ENCODE measurements at regions of chr5 and their contacts with region 1.

Region 1: GRCh38 chr5:149345147-149345875 is at the start of gene GRPEL2:
- DNase-seq: peak; percentile 89
- H3K4me3 Mint-ChIP-seq: peak within 1 kb of the TSS; percentile 95
- H3K27ac Mint-ChIP-seq: peak within 1 kb of the TSS; percentile 94
- H3K4me1 Mint-ChIP-seq: peaks cover 43% of the 10 kb centered on the region
- H3K27me3 Mint-ChIP-seq: no peaks in the 10 kb centered on the region
- total RNA-seq, gene GRPEL2: 30.4 and 30.6 TPM in 2 replicates

Region 2: GRCh38 chr5:148383564-148384379 is 961.5 kb before region 1 on chr5 and contains the start of gene FBXO38:
- intact Hi-C with region 1: loop called (anchors 1 kb)
- DNase-seq: peak; percentile 95
- H3K4me3 Mint-ChIP-seq: peak within 1 kb of the TSS; percentile 94
- H3K27ac Mint-ChIP-seq: peak within 1 kb of the TSS; percentile 99
- H3K4me1 Mint-ChIP-seq: peaks cover 72% of the 10 kb centered on the region
- H3K27me3 Mint-ChIP-seq: no peaks in the 10 kb centered on the region
- total RNA-seq, gene FBXO38: 64.3 and 80.3 TPM in 2 replicates

Region 3: DNA sequence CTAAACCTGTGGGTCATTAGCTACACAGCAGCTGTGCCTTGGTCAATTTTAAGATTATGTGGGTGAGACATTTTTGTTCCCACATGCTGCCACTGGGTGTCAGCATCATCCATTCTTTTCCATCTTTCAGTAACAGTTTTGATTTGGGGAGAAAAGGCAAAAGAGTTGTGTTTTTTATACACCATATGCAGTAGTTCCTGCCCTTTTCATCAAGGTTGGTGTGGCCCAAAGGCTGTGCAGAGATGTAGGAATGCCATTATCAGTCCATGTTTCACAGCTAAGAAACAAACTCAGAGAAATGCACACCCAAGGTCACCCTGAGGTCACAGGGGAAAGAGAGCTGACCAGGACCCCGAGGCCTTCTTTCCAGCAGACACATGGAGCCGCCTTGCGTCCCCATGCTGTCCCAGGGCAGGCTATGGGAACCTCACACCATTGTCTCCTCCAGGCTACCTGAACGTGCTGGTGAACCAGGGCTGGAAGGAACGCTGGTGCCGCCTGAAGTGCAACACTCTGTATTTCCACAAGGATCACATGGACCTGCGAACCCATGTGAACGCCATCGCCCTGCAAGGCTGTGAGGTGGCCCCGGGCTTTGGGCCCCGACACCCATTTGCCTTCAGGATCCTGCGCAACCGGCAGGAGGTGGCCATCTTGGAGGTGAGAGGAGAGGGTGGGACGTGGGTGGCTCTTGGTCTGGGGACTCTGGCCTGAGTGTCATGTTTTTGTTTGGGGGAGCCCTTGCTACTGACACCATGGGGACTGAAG is 27.8 kb before region 1 on chr5:
- intact Hi-C with region 1: loop called (anchors 2 kb)
- DNase-seq: no peak
- H3K4me3 Mint-ChIP-seq: no peak overlapping the region
- H3K27ac Mint-ChIP-seq: no peak overlapping the region
- H3K4me1 Mint-ChIP-seq: no peaks in the 10 kb centered on the region
- H3K27me3 Mint-ChIP-seq: no peaks in the 10 kb centered on the region

Region 4: GRCh38 chr5:149367249-149367971 is 22.1 kb after region 1 on chr5:
- intact Hi-C with region 1: loop called (anchors 1 kb)
- DNase-seq: peak; percentile 37
- H3K4me3 Mint-ChIP-seq: no peak overlapping the region
- H3K27ac Mint-ChIP-seq: no peak overlapping the region
- H3K4me1 Mint-ChIP-seq: peaks cover 17% of the 10 kb centered on the region
- H3K27me3 Mint-ChIP-seq: peaks cover 2% of the 10 kb centered on the region

Region 5: DNA sequence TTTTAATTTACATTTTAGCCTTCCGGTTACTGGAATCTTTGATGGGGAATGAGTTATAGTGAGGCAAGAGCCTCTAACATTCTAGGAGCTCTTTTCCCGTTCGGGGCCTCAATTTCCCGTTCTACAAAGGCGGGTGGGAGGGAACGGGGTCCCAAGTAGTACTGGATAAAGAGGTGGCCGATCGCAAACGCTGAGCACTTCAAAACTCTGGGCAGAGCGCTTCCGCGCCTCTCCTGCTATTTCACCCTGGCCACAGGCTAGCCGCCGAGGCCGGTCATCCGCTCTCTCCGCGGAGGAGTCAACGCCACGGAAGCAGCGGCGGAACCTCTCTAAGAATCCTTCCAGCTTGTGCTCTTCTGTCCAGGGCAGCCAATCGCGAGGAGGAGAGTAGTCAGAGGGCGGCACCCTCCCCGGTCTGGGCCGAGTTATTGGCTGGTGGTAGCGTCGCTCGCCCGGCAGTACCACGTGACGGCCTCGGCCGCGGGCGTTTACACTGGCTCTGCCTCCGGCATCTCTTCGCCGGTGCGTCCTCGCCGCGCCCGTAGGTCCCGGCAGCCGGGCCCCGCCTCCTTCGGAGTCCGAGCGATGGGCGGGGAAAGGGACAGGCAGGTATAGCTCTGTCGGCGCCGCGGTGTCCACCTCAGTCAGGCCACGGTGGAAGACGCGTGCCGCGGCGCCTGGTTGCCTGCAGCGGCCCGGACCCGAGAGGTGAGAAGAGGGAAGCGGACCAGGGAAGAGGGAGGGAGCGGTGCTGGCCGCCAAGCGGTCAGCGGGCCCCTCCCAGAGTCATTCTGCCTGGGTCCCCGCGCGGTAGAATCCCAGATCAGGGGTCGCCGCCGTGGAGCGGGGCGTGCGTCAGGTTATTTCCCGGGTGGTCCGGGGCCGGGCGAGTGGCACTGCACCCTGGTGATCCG is 615.2 kb after region 1 on chr5 and contains the start of gene SLC26A2:
- intact Hi-C with region 1: loop called (anchors 10 kb)
- DNase-seq: peak; percentile 94
- H3K4me3 Mint-ChIP-seq: peak within 1 kb of the TSS; percentile 95
- H3K27ac Mint-ChIP-seq: peak within 1 kb of the TSS; percentile 100
- H3K4me1 Mint-ChIP-seq: peaks cover 37% of the 10 kb centered on the region
- H3K27me3 Mint-ChIP-seq: no peaks in the 10 kb centered on the region
- total RNA-seq, gene SLC26A2: 9.3 and 9.5 TPM in 2 replicates

Region 6: GRCh38 chr5:150357326-150358260 is 1012.3 kb after region 1 on chr5 and contains the start of gene TCOF1:
- intact Hi-C with region 1: loop called (anchors 5 kb)
- DNase-seq: peak; percentile 97
- H3K4me3 Mint-ChIP-seq: peak within 1 kb of the TSS; percentile 93
- H3K27ac Mint-ChIP-seq: peak within 1 kb of the TSS; percentile 91
- H3K4me1 Mint-ChIP-seq: peaks cover 39% of the 10 kb centered on the region
- H3K27me3 Mint-ChIP-seq: no peaks in the 10 kb centered on the region
- total RNA-seq, gene TCOF1: 130 and 131 TPM in 2 replicates